Gastrocnemius medialis (tissue), 4 donors: ENCODE measurements at regions of chr1 and their contacts with region 1.

Region 1: GRCh38 chr1:91273875-91274274 is 130.8 kb downstream of the HFM1 start:
- DNase-seq: no peak
- ATAC-seq: no peak
- H3K4me3 ChIP-seq: no peak overlapping the region
- H3K27ac ChIP-seq: no peak overlapping the region
- H3K4me1 ChIP-seq: no peaks in the 10 kb centered on the region
- H3K27me3 ChIP-seq: no peaks in the 10 kb centered on the region
- CTCF ChIP-seq: no peak
- POLR2A ChIP-seq: no peak

Region 2: GRCh38 chr1:90995311-90995894 is 278.5 kb before region 1 on chr1:
- in situ Hi-C with region 1: no loop called
- intact Hi-C with region 1: no loop called
- DNase-seq: no peak
- ATAC-seq: no peak
- H3K4me3 ChIP-seq: no peak overlapping the region
- H3K27ac ChIP-seq: no peak overlapping the region
- H3K4me1 ChIP-seq: peaks cover 23 to 40% of the 10 kb centered on the region in 2 donors
- H3K27me3 ChIP-seq: no peaks in the 10 kb centered on the region
- CTCF ChIP-seq: no peak
- POLR2A ChIP-seq: no peak

Region 3: GRCh38 chr1:91929250-91929649 is 655.4 kb after region 1 on chr1:
- in situ Hi-C with region 1: loop called in 3 of 4 experiments (anchors 5 to 25 kb)
- intact Hi-C with region 1: no loop called
- DNase-seq: no peak
- ATAC-seq: no peak
- H3K4me3 ChIP-seq: no peak overlapping the region
- H3K27ac ChIP-seq: no peak overlapping the region
- H3K4me1 ChIP-seq: no peaks in the 10 kb centered on the region
- H3K27me3 ChIP-seq: no peaks in the 10 kb centered on the region
- CTCF ChIP-seq: no peak
- POLR2A ChIP-seq: no peak